Gastrocnemius medialis (tissue), 4 donors: ENCODE measurements at regions of chr16 and their contacts with region 1.

Region 1: DNA sequence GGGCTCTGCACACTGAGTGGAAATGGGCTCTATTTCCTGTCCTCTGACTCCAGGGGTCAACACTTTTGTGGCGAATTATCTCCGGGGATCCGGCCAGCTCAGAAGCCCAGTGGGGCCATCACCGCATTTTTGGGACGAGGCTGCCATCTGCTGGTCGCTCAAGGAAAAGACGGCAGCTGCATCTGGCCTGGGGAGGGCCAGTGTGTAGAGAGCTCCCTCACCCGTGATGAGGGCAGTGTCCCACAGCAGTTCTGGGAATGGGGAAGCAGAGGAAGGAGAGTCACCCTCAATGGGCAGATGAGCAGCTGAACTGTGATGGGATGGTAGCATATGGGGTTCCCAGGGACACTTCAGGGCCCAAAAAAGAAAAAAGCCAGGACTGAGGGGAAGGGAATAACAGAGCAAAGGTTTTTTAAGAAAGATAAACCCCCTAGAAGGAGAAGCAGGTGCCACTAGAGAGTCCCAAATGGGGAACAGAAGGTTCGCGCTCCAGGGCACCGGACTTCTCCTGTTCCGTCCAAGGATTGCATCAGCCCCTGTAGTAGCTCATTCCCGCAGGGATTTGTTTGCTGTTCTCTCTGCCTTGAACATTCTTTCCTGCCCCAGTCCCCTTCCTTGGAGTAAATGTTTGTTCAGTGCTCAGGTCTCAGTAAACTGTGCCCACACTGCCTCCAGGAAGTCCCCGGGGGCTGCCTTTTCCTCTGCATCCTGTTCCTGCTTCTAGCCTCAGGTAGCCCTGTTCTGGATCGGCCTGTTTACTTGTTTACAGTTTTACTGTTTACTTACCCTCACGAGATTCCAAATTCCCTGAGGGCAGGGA is 9.3 kb upstream of the ABCC12 start:
- DNase-seq: peak; percentile 62 to 63
- ATAC-seq: peak; percentile 85 to 90
- H3K4me3 ChIP-seq: no peak overlapping the region
- H3K27ac ChIP-seq: peak overlapping the region in 1 of 4 donors; percentile 29
- H3K4me1 ChIP-seq: peaks cover 0 to 2% of the 10 kb centered on the region in 2 donors
- H3K27me3 ChIP-seq: no peaks in the 10 kb centered on the region
- CTCF ChIP-seq: peak; percentile 77 to 88 (median 81)
- POLR2A ChIP-seq: no peak

Region 2: GRCh38 chr16:47029724-47030123 is 1135.4 kb before region 1 on chr16:
- in situ Hi-C with region 1: loop called in 2 of 4 experiments (anchors 5 to 10 kb)
- intact Hi-C with region 1: no loop called
- DNase-seq: no peak
- ATAC-seq: no peak
- H3K4me3 ChIP-seq: no peak overlapping the region
- H3K27ac ChIP-seq: no peak overlapping the region
- H3K4me1 ChIP-seq: no peaks in the 10 kb centered on the region
- H3K27me3 ChIP-seq: no peaks in the 10 kb centered on the region
- CTCF ChIP-seq: no peak
- POLR2A ChIP-seq: no peak

Region 3: DNA sequence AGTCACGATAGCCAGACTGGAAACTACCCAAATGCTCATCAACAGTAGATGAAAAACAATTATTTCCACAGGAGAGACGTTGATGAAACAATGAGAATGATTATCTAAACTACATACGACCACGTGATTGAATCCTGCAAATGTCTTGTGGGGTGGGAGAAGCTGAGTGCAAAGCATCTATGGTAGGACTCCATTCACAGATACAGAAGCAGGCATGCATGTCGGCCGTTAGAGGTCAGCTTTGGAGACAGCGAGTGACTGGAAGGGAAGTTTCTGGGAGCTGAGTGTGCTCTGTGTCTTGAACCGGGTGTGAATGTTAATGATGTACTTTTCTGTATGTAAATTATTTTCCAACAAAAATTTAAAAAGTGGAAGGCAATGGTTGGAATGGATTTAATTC is 1120.1 kb before region 1 on chr16:
- in situ Hi-C with region 1: loop called in 2 of 4 experiments (anchors 5 to 10 kb)
- intact Hi-C with region 1: no loop called
- DNase-seq: no peak
- ATAC-seq: no peak
- H3K4me3 ChIP-seq: no peak overlapping the region
- H3K27ac ChIP-seq: no peak overlapping the region
- H3K4me1 ChIP-seq: no peaks in the 10 kb centered on the region
- H3K27me3 ChIP-seq: no peaks in the 10 kb centered on the region
- CTCF ChIP-seq: no peak
- POLR2A ChIP-seq: no peak

Region 4: GRCh38 chr16:47141773-47142485 is 1023.2 kb before region 1 on chr16:
- in situ Hi-C with region 1: loop called in 3 of 4 experiments (anchors 10 to 25 kb)
- intact Hi-C with region 1: loop called (anchors 2 kb)
- DNase-seq: peak; percentile 56 to 67
- ATAC-seq: peak; percentile 79 to 82
- H3K4me3 ChIP-seq: peak overlapping the region; percentile 55 to 78 (median 64)
- H3K27ac ChIP-seq: peak overlapping the region in 1 of 4 donors; percentile 57
- H3K4me1 ChIP-seq: no peaks in the 10 kb centered on the region
- H3K27me3 ChIP-seq: no peaks in the 10 kb centered on the region
- CTCF ChIP-seq: peak; percentile 65 to 95 (median 76)
- POLR2A ChIP-seq: no peak

Region 5: DNA sequence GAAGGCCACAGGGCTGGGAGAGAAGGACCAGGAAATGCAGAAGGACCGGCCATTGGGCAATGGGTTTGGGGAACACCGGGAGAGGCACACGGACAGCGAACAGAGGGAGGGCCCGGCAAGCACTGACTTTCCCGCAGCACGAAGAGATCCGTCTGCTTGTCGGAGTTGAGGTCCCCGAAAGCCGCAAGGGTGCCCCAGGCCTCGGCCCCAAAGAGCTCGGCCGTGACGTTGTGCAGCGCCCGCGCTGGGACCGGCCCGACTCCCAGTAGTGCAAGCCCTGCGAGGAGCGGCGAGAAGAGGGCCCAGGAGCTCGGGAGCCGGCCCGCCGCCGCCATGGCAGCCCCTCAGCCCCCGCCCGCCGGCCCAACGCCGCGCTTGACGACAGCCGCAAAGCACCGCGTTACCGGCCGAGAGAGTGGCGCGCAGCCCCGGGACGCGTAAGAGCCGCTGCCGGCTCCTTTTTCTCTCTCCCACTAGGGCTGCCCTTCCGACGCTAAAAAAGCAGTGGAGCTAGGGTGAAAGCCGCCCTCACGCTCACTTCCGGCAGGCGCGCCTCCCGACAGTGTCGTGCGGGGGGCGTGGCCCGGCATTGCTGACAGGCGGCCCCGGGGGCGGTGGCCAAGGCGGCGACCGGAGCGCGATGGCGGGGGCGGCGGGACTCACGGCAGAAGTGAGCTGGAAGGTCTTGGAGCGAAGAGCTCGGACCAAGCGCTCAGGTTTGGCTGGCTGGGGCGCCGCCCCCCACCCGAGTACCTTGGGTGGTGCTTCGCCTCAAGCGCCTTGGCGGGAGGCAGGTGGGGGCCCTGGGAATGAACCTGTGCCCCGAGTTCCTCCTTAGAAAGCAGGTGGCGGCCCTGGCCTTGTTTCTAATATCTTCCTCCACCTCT is 704.2 kb before region 1 on chr16 and contains the starts of genes ITFG1 and PHKB:
- in situ Hi-C with region 1: loop called in 1 of 4 experiments (anchors 25 kb)
- intact Hi-C with region 1: no loop called
- DNase-seq: peak; percentile 85 to 93
- ATAC-seq: peak; percentile 87 to 89
- H3K4me3 ChIP-seq: peak within 1 kb of the TSS; percentile 70 to 96 (median 92)
- H3K27ac ChIP-seq: peak within 1 kb of the TSS; percentile 93 to 99 (median 96)
- H3K4me1 ChIP-seq: peaks cover 54 to 60% of the 10 kb centered on the region in 2 donors
- H3K27me3 ChIP-seq: no peaks in the 10 kb centered on the region
- CTCF ChIP-seq: peak in 3 of 5 experiments; percentile 13 to 28 (median 22)
- POLR2A ChIP-seq: peak; percentile 76 to 86
- total RNA-seq, gene ITFG1: 20.9 to 37.3 (median 28.6) TPM
- total RNA-seq, gene PHKB: 61.0 to 91.6 (median 79.8) TPM

Region 6: DNA sequence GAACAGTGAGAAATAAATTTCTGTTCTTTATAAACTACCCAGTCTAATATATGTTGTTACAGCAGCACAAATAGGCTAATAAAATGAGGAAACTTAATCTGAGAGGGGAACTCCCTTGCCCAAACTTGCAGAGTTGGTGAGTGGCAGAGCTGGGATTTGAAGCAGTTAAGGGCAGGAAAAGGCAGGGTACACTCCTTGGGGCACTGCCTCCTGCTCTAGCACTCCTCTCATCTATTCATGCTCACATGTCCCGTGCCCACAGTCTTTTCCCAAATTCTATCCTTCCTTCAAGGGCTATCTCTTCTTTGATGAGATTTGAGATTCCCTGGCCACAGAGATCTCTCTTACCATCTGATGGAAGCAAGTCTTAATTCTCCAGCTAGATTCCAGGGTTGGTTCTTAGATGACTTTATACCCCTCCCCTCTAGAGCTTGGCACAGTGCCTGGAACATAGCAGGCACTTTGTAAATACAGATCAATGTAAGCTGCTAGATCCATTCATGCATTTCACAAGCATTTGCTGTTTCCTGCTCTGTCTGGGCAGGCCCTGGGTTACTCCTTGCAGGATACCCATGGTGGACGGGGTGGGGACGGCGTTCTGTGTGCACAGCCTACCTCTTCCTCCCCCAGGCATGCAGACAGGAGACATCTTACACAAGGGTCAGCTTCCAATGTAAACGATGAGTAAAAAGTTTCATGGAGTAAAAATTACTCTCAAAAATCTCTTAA is 29.9 kb after region 1 on chr16:
- in situ Hi-C with region 1: no loop called
- intact Hi-C with region 1: no loop called
- DNase-seq: no peak
- ATAC-seq: no peak
- H3K4me3 ChIP-seq: no peak overlapping the region
- H3K27ac ChIP-seq: no peak overlapping the region
- H3K4me1 ChIP-seq: no peaks in the 10 kb centered on the region
- H3K27me3 ChIP-seq: peaks cover 0 to 2% (median 0%) of the 10 kb centered on the region in 3 donors
- CTCF ChIP-seq: no peak
- POLR2A ChIP-seq: no peak